GM13976 (cell line): ENCODE measurements at regions of chr12 and their contacts with region 1.

Region 1: GRCh38 chr12:10140001-10140400 is 10.0 kb upstream of the CLEC7A start:
- DNase-seq: peak; percentile 46
- CTCF ChIP-seq: peak; percentile 53

Region 2: DNA sequence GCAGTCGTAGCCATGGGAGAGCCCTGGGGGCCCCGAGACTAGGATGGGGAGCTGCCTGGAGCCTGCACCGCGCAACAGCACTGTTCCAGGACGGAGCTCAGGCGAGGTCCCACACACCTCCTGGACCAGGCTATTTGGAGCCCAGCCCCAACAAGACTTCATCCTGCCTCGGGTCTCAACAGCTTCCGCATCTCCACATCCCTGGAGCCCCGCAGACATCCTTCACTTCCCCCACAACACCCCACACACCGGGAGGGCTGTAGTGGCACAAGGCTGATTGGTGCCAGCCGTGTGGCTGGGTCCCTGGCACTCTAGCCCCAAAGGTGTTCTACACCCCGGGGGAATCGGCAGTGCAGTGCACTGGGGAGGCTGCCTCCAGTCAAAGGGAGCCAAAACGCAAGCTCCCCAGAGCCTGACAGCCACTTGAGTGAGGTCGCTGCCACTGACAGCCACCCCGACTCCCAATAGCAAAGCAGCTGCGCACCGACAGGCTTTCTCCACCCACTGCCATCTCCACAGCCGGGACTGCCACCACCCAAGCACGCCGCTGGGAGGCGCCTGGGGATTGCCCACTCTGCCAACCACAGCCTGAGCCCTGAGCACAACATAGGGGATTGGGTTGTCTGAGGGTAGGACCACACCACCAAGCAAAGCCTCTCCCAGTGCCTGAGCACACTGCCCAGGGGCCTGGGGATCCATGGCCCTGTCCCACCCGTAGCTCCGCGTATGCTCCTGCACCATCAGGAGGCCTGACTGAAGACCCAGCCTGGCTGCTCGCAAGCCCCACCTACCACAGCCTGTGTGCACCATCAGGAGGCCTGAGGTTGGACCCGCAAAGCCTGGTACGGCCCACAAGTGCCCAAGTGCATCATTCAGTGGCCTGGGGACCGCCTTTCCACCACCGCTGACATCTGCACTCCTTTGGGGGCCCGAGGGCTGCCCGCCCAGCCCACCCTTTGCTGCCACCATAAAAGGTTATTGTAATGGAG is 325.9 kb before region 1 on chr12:
- in situ Hi-C with region 1: loop called (anchors 25 kb)
- DNase-seq: peak; percentile 94
- CTCF ChIP-seq: peak; percentile 91

Region 3: DNA sequence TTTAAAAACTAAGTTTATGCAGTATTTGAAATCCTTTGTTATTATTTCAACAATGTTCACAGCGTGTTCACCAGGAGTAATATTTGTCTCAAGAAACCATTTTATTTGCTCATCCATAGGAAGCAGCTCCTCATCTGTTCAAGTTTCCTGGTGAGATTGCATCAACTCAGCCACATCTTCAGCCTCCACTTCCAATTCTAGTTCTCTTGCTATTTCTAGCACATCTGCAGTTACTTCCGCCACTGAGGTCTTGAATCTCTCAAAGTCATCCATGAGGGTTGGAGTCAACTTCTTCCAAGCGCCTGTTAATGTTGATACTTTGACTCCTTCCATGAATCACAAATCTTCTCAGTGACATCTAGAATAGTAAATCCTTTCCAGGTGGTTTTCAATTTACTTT is 91.5 kb before region 1 on chr12:
- in situ Hi-C with region 1: loop called (anchors 10 kb)
- DNase-seq: no peak
- CTCF ChIP-seq: no peak